ENCODE measurements at regions of chr1 and their contacts with region 1.

Region 1: DNA sequence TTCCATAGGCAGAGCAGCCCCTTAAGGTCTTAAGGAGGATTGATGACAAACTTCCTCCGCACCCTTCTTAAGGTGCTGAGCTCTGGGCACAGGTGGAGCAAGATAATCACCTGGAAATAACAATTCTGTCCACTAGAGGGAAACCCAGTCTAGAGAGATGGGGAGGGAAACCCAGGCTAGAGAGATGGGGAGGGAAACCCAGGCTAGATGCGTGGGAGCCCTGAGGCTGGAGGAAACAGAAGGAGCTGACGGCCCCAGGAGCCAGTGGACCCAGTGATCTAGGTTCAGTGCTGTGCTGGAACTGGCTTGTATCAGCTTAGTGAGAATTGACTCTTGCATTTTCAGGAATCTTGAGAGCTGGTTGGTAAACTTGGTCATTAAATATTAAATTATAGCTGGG is 17.8 kb upstream of the MYCL start:
- DNase-seq: peak; percentile 21
- H3K4me3 ChIP-seq: no peak overlapping the region
- H3K27ac ChIP-seq: no peak overlapping the region
- H3K27me3 ChIP-seq: peaks cover 12% of the 10 kb centered on the region
- CTCF ChIP-seq: peak; percentile 71

Region 2: GRCh38 chr1:39816415-39817090 is 103.0 kb before region 1 on chr1:
- CTCF ChIA-PET with region 1: interaction called, 13 read pairs
- POLR2A ChIA-PET with region 1: no interaction called
- DNase-seq: peak; percentile 23
- H3K4me3 ChIP-seq: no peak overlapping the region
- H3K27ac ChIP-seq: no peak overlapping the region
- H3K27me3 ChIP-seq: peaks cover 12% of the 10 kb centered on the region
- CTCF ChIP-seq: peak; percentile 82

Region 3: DNA sequence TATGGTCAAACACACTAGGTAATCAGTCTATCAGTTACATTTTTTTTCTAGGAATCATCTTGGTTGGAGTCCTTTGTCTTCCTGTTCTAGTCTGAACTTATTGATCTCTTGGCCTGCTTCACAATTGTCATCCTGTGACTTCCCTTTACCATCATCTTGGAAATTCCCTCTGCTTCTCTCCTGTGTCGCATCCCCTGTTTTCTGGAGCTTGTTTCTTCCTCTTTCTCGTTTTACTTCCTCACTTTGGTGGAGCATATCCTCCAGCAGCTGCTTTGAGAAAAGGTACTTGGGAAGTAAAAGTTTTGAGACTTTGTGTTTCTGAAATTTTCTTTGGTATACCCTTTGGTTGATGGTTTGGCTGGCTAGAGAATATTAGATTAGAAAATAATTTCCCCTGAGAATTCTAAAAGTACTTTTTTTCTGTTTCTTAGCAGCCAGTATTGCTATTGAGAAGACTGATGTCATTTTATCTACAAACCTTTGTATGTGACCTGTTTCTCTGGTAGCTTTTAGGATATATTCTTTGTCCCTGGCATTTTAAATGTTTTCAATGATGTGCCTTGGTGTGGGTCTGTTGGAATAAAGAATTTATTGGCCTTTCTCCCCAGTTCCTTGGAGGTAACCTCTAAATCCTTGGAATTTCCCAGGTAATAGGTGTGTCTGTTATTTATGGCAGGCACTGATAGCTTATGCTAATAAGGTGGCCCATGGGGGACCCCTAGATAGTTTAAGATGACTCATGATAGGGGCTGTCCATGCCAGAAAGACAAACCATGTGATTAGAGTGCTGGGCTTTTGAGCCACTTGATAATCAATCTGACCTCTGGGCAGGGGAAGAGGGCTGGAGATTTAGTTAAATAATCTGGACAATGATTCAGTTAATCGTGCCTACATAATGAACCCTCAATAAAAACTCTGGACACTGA is 11.8 kb before region 1 on chr1:
- CTCF ChIA-PET with region 1: interaction called, 11 read pairs
- POLR2A ChIA-PET with region 1: interaction called, 7 read pairs
- DNase-seq: no peak
- H3K4me3 ChIP-seq: no peak overlapping the region
- H3K27ac ChIP-seq: no peak overlapping the region
- H3K27me3 ChIP-seq: peaks cover 15% of the 10 kb centered on the region
- CTCF ChIP-seq: no peak

Region 4: DNA sequence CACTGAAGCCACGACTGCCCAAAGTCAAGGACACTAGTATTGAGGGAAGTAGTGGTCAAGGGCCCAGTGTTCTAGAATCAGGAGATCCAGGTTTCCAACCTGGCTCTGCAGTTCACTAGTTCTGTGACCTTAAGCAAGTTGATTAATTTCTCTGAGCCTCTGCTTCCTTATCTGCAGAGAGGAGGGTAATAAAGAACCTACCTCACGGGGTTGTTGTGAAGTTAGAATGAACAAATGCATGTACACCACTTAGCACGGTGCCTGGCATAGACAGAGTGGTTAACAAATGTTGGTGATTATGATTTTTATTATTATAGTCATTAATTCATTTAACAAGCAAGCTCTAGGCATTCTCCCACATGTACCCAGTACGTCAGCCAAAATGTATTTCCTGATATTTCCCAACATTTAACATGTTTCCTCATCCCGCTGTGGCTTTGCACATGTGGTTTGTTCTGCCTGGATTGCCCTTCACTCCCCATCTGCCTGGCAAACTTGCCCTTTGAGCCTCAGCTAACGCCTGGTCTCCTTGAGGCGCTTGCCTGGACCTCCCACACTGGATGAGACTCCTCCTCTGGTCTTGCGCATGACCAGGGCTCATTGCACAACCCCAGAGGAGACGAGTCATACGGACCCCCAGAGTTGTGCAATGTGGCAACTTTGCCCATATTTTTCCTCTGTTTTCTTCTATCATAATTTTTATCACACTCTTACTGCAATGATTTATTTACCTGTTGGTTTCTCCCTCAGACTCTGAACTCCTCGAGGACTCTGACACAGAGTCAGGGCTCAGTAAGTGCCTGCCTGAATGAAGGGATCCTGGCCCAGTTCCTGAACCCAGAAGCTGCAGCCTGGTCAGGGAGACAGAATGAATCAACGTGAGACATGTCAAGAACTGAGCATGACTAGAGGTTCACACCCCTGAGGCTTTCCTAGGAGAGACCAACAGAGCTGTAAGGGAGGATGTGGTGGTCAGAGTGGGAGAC is 14.7 kb after region 1 on chr1:
- CTCF ChIA-PET with region 1: interaction called, 13 read pairs
- POLR2A ChIA-PET with region 1: no interaction called
- DNase-seq: peak; percentile 75
- H3K4me3 ChIP-seq: no peak overlapping the region
- H3K27ac ChIP-seq: peak overlapping the region; percentile 80
- H3K27me3 ChIP-seq: peaks cover 4% of the 10 kb centered on the region
- CTCF ChIP-seq: no peak

Measured in AG04450 (cell line).